ENCODE measurements at regions of chr4 and their contacts with region 1.

Region 1: GRCh38 chr4:47122592-47123291 is 91.4 kb downstream of the GABRB1 start:
- DNase-seq: peak; percentile 68
- H3K4me3 ChIP-seq: no peak overlapping the region
- H3K27ac ChIP-seq: no peak overlapping the region
- H3K27me3 ChIP-seq: no peaks in the 10 kb centered on the region
- CTCF ChIP-seq: peak; percentile 95

Region 2: GRCh38 chr4:46844325-46844917 is 278.3 kb before region 1 on chr4:
- CTCF ChIA-PET with region 1: interaction called, 31 read pairs
- POLR2A ChIA-PET with region 1: no interaction called
- DNase-seq: peak; percentile 15
- H3K4me3 ChIP-seq: no peak overlapping the region
- H3K27ac ChIP-seq: no peak overlapping the region
- H3K27me3 ChIP-seq: no peaks in the 10 kb centered on the region
- CTCF ChIP-seq: peak; percentile 74

Region 3: GRCh38 chr4:46999566-46999965 is 123.2 kb before region 1 on chr4:
- CTCF ChIA-PET with region 1: interaction called, 14 read pairs
- POLR2A ChIA-PET with region 1: no interaction called
- DNase-seq: peak; percentile 36
- H3K4me3 ChIP-seq: no peak overlapping the region
- H3K27ac ChIP-seq: no peak overlapping the region
- H3K27me3 ChIP-seq: no peaks in the 10 kb centered on the region
- CTCF ChIP-seq: no peak

Region 4: DNA sequence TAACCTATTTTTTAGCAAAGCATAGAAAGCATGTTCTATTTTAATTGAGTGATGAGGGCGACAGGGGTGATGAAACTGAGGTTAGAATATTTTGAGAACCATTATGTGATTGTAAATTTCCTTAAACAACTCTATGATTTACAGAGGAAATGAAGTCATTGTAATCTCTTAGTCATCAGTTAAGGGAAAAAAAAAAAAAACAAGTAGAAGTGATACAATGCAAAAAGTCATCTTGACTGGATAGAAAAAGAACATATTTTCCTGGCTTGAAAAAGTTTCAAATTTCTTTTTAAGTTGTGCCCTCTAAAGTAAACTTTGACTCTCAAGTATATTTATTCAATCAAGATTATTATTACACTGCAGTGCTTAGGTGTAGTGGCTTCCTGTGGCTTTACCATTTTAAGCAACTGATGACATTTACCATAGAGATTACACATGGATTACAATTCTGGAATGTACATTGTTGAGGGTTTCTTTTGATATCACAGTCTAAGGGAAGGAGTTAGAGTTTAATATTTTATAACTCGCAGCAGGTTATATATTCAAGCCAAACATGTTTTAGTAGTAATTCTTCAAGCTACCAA is 50.8 kb before region 1 on chr4:
- CTCF ChIA-PET with region 1: interaction called, 31 read pairs
- POLR2A ChIA-PET with region 1: no interaction called
- DNase-seq: peak; percentile 32
- H3K4me3 ChIP-seq: no peak overlapping the region
- H3K27ac ChIP-seq: no peak overlapping the region
- H3K27me3 ChIP-seq: no peaks in the 10 kb centered on the region
- CTCF ChIP-seq: no peak

Region 5: DNA sequence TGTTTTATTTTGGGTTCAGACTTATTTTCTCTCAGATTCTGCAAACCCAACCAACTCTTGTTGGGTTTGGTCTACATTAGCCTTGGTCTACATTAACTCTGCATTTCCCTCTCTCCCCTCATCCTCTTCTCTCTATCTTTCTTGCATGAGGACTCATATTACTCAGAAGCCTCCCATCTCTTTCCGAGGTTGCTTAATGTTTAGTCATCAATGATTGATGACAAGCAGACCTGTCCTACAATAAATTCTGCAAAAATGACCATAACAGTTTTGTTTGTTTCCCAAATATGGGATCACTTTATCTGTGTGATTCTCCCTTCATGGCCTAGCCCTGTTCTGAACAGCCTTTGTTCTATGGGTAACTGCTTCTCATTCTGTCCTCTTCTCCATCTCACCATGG is 16.2 kb before region 1 on chr4:
- CTCF ChIA-PET with region 1: interaction called, 72 read pairs
- POLR2A ChIA-PET with region 1: interaction called, 3 read pairs
- DNase-seq: no peak
- H3K4me3 ChIP-seq: no peak overlapping the region
- H3K27ac ChIP-seq: no peak overlapping the region
- H3K27me3 ChIP-seq: no peaks in the 10 kb centered on the region
- CTCF ChIP-seq: no peak

Region 6: GRCh38 chr4:47154816-47155370 is 32.2 kb after region 1 on chr4:
- CTCF ChIA-PET with region 1: interaction called, 26 read pairs
- POLR2A ChIA-PET with region 1: no interaction called
- DNase-seq: no peak
- H3K4me3 ChIP-seq: no peak overlapping the region
- H3K27ac ChIP-seq: no peak overlapping the region
- H3K27me3 ChIP-seq: no peaks in the 10 kb centered on the region
- CTCF ChIP-seq: no peak

Region 7: GRCh38 chr4:47195706-47196105 is 73.0 kb after region 1 on chr4:
- CTCF ChIA-PET with region 1: no interaction called
- POLR2A ChIA-PET with region 1: no interaction called
- DNase-seq: no peak
- H3K4me3 ChIP-seq: no peak overlapping the region
- H3K27ac ChIP-seq: no peak overlapping the region
- H3K27me3 ChIP-seq: no peaks in the 10 kb centered on the region
- CTCF ChIP-seq: no peak

Measured in AG04450 (cell line).